Aorta (tissue), 5 donors: ENCODE measurements at regions of chr22 and their contacts with region 1.

Region 1: GRCh38 chr22:48644108-48644507 is 1183.6 kb downstream of the BRD1 start:
- DNase-seq: no peak
- ATAC-seq: no peak
- H3K4me3 ChIP-seq: no peak overlapping the region
- H3K27ac ChIP-seq: no peak overlapping the region
- H3K4me1 ChIP-seq: no peaks in the 10 kb centered on the region
- H3K27me3 ChIP-seq: no peaks in the 10 kb centered on the region

Region 2: DNA sequence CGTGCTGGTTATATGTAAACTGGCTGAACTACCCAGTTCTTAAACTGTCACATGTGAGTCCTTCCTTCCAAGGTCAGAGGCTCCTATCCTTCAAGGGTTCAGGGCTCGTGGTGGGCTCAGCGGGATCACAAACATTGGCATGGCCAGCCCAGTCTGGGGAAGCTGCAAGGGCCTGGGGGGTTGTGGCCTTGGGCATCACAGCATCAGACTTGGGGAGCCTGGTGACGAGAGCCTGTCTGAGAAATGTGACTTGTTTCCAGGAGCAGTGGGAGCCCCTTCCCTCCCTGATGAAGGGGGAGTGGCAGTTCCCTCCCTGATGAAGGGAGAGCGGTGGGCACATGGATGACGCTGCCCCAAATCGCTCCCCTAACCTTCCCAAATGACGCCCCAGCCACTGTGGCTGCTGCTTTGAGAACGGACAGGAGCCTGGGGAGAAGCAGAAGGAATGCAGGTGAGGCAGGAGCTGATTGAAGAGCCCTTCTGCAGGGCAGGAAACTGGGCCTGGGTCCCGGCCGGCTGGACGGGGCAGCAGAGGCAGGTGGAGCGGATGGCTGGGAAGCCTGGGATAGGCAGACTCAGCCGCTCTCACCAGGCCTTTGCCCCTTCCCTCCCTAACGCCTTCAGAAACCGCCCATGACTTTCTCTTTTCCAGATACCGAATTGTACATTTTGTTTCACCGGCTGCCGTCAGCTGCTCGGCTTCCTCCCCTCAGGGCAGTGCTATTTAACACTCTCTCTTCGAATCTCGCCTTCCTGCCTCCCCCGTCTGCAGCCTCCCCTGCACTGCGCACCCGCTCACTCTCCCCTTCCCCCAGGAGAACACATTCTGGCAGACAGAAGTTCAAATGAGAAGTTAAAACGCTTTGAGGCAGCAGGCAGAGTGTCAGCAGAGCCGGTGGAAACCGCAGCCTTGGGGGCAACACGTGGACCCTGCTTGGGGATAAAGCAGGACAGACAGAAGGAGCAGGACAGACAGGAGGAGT is 303.1 kb before region 1 on chr22:
- intact Hi-C with region 1: no loop called
- DNase-seq: peak in 1 of 2 donors; percentile 72
- ATAC-seq: no peak
- H3K4me3 ChIP-seq: no peak overlapping the region
- H3K27ac ChIP-seq: no peak overlapping the region
- H3K4me1 ChIP-seq: no peaks in the 10 kb centered on the region
- H3K27me3 ChIP-seq: no peaks in the 10 kb centered on the region

Region 3: GRCh38 chr22:48581796-48582469 is 62.2 kb before region 1 on chr22:
- intact Hi-C with region 1: loop called in 1 of 2 experiments (anchors 10 kb)
- DNase-seq: peak in 1 of 2 donors; percentile 29
- ATAC-seq: no peak
- H3K4me3 ChIP-seq: no peak overlapping the region
- H3K27ac ChIP-seq: no peak overlapping the region
- H3K4me1 ChIP-seq: no peaks in the 10 kb centered on the region
- H3K27me3 ChIP-seq: no peaks in the 10 kb centered on the region